Sigmoid colon (tissue), 7 donors: ENCODE measurements at regions of chr1 and their contacts with region 1.

Region 1: DNA sequence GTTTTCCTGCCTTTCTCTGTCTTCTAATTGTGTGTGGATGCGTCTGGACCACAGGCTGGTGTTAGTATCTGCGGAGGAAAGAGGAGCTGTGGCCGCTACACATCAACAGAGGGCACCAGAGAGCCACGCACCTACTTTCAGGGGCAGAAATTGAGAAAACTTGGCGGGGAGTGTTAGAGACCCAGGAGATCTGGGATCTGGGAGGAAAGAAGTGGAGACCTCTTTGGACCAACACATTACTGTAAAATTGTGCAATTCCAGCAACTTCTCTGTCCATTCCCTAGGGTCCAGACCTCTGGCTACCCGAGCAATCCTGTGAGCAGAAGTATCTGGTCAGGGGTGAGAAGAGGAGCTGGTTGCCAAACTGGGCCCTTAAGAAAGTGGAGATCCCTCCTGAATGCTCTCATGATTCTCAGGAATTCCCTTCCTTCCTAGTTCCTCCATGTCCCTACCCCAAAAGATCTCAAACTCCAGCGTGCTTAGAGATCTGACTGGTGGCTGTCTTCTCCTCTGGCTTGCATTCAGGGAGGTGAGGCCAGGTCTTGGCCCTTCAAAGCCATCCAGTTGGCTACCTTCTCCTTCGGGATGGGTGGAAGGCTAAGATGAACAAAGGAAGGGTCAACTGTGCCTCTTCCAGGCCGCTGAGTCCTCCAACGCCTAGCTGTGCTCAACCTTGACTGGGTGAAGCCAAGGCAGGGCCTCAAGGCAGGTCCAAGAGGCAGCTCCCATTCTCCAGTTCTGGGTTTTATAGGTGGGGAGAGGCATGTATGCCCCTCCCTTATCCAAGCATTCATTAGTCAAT is 1.2 kb upstream of the KIRREL1 start:
- DNase-seq: peak; percentile 89
- H3K4me3 ChIP-seq: peak overlapping the region in 1 of 4 donors; percentile 99
- H3K27ac ChIP-seq: peak overlapping the region; percentile 91 to 99 (median 97)
- H3K4me1 ChIP-seq: peaks cover 0 to 38% (median 35%) of the 10 kb centered on the region in 4 donors
- H3K27me3 ChIP-seq: no peaks in the 10 kb centered on the region
- CTCF ChIP-seq: peak; percentile 95 to 97 (median 96)
- EP300 ChIP-seq: no peak
- POLR2A ChIP-seq: no peak

Region 2: DNA sequence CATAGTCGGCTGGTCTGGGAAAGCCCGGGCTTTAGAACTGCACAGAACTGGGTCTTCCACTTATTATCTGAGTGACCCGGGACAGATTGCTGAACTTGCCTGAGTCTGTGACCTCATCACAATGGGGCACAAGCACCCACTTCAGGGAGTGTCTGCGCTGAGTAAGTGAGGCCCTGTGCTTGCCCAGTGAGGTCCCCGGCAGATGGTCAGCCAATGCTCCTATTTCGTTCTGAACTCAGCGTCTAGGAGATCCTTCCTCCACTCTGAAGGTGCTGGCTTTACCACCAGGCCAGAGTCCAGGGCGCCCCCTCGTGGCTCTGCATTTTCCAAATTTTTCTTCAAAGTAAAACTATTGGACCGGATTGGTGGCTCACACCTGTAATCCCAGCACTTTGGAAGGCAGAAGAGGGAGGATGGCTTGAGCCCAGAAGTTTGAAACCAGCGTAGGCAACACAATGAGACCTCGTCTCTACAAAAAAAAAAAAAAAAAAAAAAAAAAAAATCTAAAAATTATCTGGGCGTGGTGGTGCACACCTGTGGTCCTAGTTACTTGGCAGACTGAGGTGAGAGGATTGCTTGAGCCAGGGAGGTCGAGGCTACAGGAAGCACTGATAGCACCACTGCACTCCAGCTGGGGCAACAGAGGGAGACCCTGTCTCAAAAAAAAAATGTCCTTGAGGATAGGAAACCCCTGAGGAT is 501.6 kb before region 1 on chr1:
- intact Hi-C with region 1: no loop called
- DNase-seq: no peak
- H3K4me3 ChIP-seq: no peak overlapping the region
- H3K27ac ChIP-seq: no peak overlapping the region
- H3K4me1 ChIP-seq: no peaks in the 10 kb centered on the region
- H3K27me3 ChIP-seq: peaks cover 0 to 3% (median 0%) of the 10 kb centered on the region in 3 donors
- CTCF ChIP-seq: peak in 3 of 4 experiments; percentile 35 to 40 (median 37)
- EP300 ChIP-seq: no peak
- POLR2A ChIP-seq: no peak

Region 3: GRCh38 chr1:158011714-158012113 is 19.5 kb after region 1 on chr1:
- intact Hi-C with region 1: loop called (anchors 2 kb)
- DNase-seq: no peak
- H3K4me3 ChIP-seq: no peak overlapping the region
- H3K27ac ChIP-seq: peak overlapping the region; percentile 86 to 96 (median 90)
- H3K4me1 ChIP-seq: peaks cover 0 to 100% (median 96%) of the 10 kb centered on the region in 4 donors
- H3K27me3 ChIP-seq: no peaks in the 10 kb centered on the region
- CTCF ChIP-seq: no peak
- EP300 ChIP-seq: no peak
- POLR2A ChIP-seq: no peak

Region 4: GRCh38 chr1:158035976-158036583 is 43.8 kb after region 1 on chr1:
- intact Hi-C with region 1: loop called (anchors 1 kb)
- DNase-seq: no peak
- H3K4me3 ChIP-seq: no peak overlapping the region
- H3K27ac ChIP-seq: peak overlapping the region in 2 of 4 donors; percentile 30 to 41
- H3K4me1 ChIP-seq: peaks cover 0 to 46% (median 38%) of the 10 kb centered on the region in 4 donors
- H3K27me3 ChIP-seq: no peaks in the 10 kb centered on the region
- CTCF ChIP-seq: peak; percentile 69 to 74 (median 72)
- EP300 ChIP-seq: no peak
- POLR2A ChIP-seq: no peak

Region 5: DNA sequence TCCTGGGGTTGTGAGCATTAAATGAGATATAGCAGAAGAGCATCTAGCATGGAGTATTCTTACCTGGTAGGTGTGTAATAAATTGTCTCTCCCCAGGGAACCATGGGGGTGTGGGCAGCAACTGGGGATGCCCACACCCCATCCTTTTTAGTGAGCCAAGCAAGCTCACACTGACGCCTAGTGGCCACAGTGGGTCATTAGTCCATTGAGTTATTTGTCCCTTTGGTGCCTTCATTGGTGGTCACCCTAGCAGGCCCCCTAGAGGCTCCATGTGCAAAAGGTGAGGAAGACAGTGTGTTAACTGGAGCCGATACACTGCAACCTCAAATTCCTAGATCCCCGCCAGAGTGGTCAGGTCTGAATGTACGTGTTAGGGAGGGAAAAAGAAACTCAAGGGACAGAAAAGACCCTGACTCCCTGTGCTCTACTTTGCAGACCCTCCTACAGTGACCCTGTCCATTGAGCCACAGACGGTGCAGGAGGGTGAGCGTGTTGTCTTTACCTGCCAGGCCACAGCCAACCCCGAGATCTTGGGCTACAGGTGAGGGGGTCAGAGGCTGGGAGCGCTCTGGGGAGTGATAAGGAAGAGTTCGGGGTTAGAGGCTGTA is 95.2 kb after region 1 on chr1:
- intact Hi-C with region 1: loop called (anchors 1 kb)
- DNase-seq: peak; percentile 78
- H3K4me3 ChIP-seq: no peak overlapping the region
- H3K27ac ChIP-seq: no peak overlapping the region
- H3K4me1 ChIP-seq: no peaks in the 10 kb centered on the region
- H3K27me3 ChIP-seq: no peaks in the 10 kb centered on the region
- CTCF ChIP-seq: peak; percentile 65 to 89 (median 80)
- EP300 ChIP-seq: no peak
- POLR2A ChIP-seq: no peak

Region 6: DNA sequence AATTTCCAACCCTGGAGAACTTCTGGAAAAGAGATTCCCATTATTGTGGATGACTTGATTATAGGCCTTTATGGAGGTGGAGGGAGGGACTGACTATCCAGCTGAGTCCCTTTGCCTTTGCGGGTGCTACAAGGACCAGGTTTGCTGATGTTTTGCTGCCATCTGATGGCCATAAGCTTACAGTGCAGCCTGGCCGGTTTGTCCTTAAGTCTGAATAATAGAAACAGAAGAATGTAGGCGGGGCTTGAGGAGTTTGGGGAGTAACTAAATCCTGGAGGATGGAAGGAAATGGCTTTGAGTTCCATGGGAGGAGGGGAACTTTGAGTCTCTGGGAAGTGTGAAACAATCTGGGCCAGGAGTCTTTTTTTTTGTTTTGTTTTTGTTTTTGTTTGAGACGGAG is 132.8 kb after region 1 on chr1:
- intact Hi-C with region 1: loop called (anchors 2 kb)
- DNase-seq: peak; percentile 94
- H3K4me3 ChIP-seq: no peak overlapping the region
- H3K27ac ChIP-seq: no peak overlapping the region
- H3K4me1 ChIP-seq: no peaks in the 10 kb centered on the region
- H3K27me3 ChIP-seq: no peaks in the 10 kb centered on the region
- CTCF ChIP-seq: peak; percentile 81 to 96 (median 96)
- EP300 ChIP-seq: no peak
- POLR2A ChIP-seq: no peak